Activated CD4-positive, alpha-beta T cell treated with anti-CD3 and anti-CD28 coated beads for 36 hours (primary cell): ENCODE measurements at regions of chr4 and their contacts with region 1.

Region 1: GRCh38 chr4:77075869-77076799 is at the start of gene CCNI:
- DNase-seq: peak; percentile 95
- ATAC-seq: peak; percentile 77
- H3K4me3 Mint-ChIP-seq: no peak within 1 kb of the TSS
- H3K27ac Mint-ChIP-seq: peak within 1 kb of the TSS; percentile 99
- H3K4me1 Mint-ChIP-seq: peaks cover 45% of the 10 kb centered on the region
- H3K27me3 Mint-ChIP-seq: no peaks in the 10 kb centered on the region
- total RNA-seq, gene CCNI: 226 to 230 TPM

Region 2: DNA sequence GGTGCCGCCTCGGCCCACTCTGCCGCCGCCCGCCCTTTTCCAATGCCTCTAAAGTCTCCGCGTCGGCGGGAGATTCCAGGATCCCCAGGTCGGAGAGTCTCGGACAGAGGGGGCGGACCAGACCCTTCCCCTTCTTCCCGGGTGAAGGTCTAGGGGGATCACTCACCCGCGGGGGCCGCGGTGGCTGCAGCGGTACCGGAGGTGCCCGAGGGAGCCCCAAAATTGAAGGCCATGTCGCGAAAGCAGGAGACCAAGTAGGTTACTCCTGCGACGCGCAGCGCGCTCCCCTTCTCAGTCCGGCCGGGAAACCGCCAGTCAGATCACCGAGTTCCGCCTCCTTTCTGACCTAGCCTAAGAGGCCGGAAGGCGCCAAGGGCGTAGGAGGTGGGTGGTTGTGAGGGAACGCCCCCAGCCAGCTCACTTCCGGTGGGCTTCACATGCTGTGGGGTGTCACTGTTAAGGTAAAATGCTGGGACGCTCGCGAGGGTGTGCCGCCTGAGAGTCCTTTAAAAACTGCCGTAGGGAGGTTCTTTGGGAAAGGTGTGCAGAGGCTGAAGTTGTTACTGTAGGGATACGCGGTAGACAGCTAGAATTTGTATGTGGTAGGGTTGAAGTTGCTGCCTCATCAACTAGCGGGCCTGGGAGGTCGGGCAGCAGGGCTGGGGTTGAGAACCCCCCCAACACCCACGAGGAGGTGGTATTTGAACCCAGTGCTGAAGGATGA is 927.8 kb before region 1 on chr4 and contains the start of gene NUP54:
- CTCF ChIA-PET with region 1: no interaction called
- POLR2A ChIA-PET with region 1: no interaction called
- intact Hi-C with region 1: loop called in 1 of 2 experiments (anchors 1 kb)
- DNase-seq: peak; percentile 97
- ATAC-seq: peak; percentile 97
- H3K4me3 Mint-ChIP-seq: peak within 1 kb of the TSS; percentile 86
- H3K27ac Mint-ChIP-seq: peak within 1 kb of the TSS; percentile 89
- H3K4me1 Mint-ChIP-seq: peaks cover 25% of the 10 kb centered on the region
- H3K27me3 Mint-ChIP-seq: no peaks in the 10 kb centered on the region
- total RNA-seq, gene NUP54: 58.2 to 67.3 TPM

Region 3: DNA sequence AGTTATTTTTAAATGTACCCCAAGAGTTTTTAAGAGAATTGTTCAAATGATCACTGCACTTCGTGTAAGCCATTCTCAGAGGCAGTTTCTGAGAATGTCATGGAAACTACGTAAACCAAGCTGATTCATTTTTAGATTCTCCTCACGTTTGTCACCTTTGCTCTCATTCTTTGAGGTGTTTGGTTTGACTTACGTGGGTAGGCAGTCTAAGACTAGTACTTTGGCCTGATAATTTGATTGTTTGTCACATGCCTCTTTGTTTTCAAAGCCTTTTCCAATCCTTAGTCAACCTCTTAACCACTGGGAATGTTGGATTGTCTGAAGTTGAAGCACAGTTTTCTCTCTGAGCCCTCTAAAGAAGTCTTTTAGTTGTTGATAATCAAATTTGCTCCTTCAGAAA is 116.1 kb before region 1 on chr4:
- CTCF ChIA-PET with region 1: no interaction called
- POLR2A ChIA-PET with region 1: no interaction called
- intact Hi-C with region 1: loop called in 1 of 2 experiments (anchors 1 kb)
- DNase-seq: no peak
- ATAC-seq: peak; percentile 90
- H3K4me3 Mint-ChIP-seq: no peak overlapping the region
- H3K27ac Mint-ChIP-seq: no peak overlapping the region
- H3K4me1 Mint-ChIP-seq: peaks cover 23% of the 10 kb centered on the region
- H3K27me3 Mint-ChIP-seq: peaks cover 4% of the 10 kb centered on the region

Region 4: GRCh38 chr4:77052352-77052751 is 23.8 kb before region 1 on chr4:
- CTCF ChIA-PET with region 1: interaction called, 4 read pairs
- POLR2A ChIA-PET with region 1: interaction called, 11 read pairs
- intact Hi-C with region 1: no loop called
- DNase-seq: peak; percentile 65
- ATAC-seq: no peak
- H3K4me3 Mint-ChIP-seq: no peak overlapping the region
- H3K27ac Mint-ChIP-seq: no peak overlapping the region
- H3K4me1 Mint-ChIP-seq: no peaks in the 10 kb centered on the region
- H3K27me3 Mint-ChIP-seq: no peaks in the 10 kb centered on the region

Region 5: GRCh38 chr4:77203380-77204197 is 127.5 kb after region 1 on chr4:
- CTCF ChIA-PET with region 1: interaction called, 12 read pairs
- POLR2A ChIA-PET with region 1: interaction called, 3 read pairs
- intact Hi-C with region 1: loop called (anchors 5 to 10 kb)
- DNase-seq: peak; percentile 77
- ATAC-seq: peak; percentile 73
- H3K4me3 Mint-ChIP-seq: no peak overlapping the region
- H3K27ac Mint-ChIP-seq: no peak overlapping the region
- H3K4me1 Mint-ChIP-seq: peaks cover 3% of the 10 kb centered on the region
- H3K27me3 Mint-ChIP-seq: peaks cover 2% of the 10 kb centered on the region

Region 6: GRCh38 chr4:77862478-77863216 is 786.5 kb after region 1 on chr4 and contains the start of gene MRPL1:
- CTCF ChIA-PET with region 1: no interaction called
- POLR2A ChIA-PET with region 1: no interaction called
- intact Hi-C with region 1: loop called (anchors 2 to 5 kb)
- DNase-seq: peak; percentile 92
- ATAC-seq: peak; percentile 78
- H3K4me3 Mint-ChIP-seq: peak within 1 kb of the TSS; percentile 98
- H3K27ac Mint-ChIP-seq: peak within 1 kb of the TSS; percentile 100
- H3K4me1 Mint-ChIP-seq: peaks cover 61% of the 10 kb centered on the region
- H3K27me3 Mint-ChIP-seq: peaks cover 2% of the 10 kb centered on the region
- total RNA-seq, gene MRPL1: 61.1 to 70.6 TPM